Activated naive CD4-positive, alpha-beta T cell treated with anti-CD3 and anti-CD28 coated beads for 36 hours (primary cell): ENCODE measurements at regions of chrX and their contacts with region 1.

Region 1: GRCh38 chrX:52261463-52262194 is 76.9 kb downstream of the MAGED4 start:
- DNase-seq: peak; percentile 91
- H3K4me3 Mint-ChIP-seq: peak overlapping the region; percentile 90
- H3K27ac Mint-ChIP-seq: peak overlapping the region; percentile 98
- H3K4me1 Mint-ChIP-seq: peaks cover 1% of the 10 kb centered on the region
- H3K27me3 Mint-ChIP-seq: peaks cover 2% of the 10 kb centered on the region

Region 2: DNA sequence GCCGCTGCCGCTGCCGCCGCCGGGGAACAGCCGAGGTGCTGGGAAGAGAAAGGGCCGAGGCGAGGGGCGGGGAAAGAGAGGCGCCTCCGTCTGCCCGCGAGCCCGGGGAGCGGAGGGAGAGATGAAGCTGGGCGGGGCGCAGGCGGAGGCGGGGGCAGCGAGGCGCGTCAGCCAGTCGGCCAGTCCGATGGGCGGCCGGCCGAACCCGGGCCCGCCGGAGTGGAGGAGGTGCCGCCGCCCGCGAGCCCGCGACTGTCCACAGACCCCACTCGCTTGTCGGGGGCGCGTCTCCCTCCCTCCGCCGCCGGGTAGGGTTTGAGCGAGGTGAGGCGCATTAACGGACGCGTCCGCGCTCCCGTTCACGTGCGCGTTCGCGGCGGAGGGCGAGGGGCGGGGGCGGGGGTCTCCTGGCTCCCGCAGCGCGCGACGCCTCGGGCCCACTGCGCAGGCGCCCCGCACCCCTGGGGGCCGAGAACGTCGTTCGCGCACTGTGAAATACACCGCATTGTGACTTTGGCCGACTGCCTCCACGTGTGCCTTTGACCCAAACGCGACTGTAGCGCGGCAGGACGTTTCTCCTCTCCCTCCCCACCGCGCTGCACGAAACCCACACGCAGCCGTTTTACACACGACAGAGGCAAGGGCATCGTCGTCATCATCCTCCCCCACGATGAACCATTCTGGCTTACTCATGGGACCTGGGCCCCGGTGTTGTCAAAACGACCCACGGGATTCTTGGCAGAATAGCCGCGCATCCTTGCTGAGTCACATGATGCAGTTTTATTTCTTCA is 764.9 kb before region 1 on chrX and contains the start of gene NUDT11:
- CTCF ChIA-PET with region 1: no interaction called
- intact Hi-C with region 1: loop called (anchors 5 kb)
- DNase-seq: peak; percentile 57
- H3K4me3 Mint-ChIP-seq: peak within 1 kb of the TSS; percentile 79
- H3K27ac Mint-ChIP-seq: no peak within 1 kb of the TSS
- H3K4me1 Mint-ChIP-seq: peaks cover 7% of the 10 kb centered on the region
- H3K27me3 Mint-ChIP-seq: peaks cover 17% of the 10 kb centered on the region
- total RNA-seq, gene NUDT11: 1.1 to 1.5 TPM

Region 3: DNA sequence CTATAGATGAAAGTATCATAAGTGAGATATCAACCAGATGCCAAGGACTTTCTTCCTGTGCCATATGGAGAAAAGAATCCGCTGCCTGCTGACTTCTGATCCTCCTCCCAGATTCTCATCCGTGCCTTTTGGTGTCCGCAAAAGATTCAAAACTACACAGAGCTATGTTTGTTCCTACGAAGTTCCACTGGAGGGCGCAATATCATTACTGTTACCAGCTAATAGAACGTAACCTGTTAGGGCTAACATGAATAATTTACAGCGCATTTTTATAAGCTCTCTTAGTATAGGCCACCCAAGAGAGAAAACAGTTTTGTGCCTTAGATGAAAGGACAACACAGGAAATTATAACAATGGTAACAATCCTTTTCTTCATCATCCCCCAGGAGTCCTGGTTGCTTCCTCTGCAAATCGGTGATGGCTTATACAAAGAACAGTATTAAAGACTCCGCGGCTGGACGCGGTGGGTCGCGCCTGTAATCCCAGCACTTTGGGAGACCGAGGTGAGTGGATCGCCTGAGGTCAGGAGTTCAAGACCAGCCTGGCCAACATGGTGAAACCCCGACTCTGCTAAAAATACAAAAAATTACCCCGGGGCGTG is 620.1 kb before region 1 on chrX:
- CTCF ChIA-PET with region 1: interaction called, 3 read pairs
- intact Hi-C with region 1: loop called (anchors 1 kb)
- DNase-seq: peak; percentile 17
- H3K4me3 Mint-ChIP-seq: no peak overlapping the region
- H3K27ac Mint-ChIP-seq: no peak overlapping the region
- H3K4me1 Mint-ChIP-seq: no peaks in the 10 kb centered on the region
- H3K27me3 Mint-ChIP-seq: peaks cover 18% of the 10 kb centered on the region

Region 4: GRCh38 chrX:51802917-51803688 is 458.5 kb before region 1 on chrX:
- CTCF ChIA-PET with region 1: interaction called, 4 read pairs
- intact Hi-C with region 1: loop called (anchors 5 kb)
- DNase-seq: peak; percentile 70
- H3K4me3 Mint-ChIP-seq: peak overlapping the region; percentile 98
- H3K27ac Mint-ChIP-seq: peak overlapping the region; percentile 97
- H3K4me1 Mint-ChIP-seq: peaks cover 21% of the 10 kb centered on the region
- H3K27me3 Mint-ChIP-seq: no peaks in the 10 kb centered on the region

Region 5: DNA sequence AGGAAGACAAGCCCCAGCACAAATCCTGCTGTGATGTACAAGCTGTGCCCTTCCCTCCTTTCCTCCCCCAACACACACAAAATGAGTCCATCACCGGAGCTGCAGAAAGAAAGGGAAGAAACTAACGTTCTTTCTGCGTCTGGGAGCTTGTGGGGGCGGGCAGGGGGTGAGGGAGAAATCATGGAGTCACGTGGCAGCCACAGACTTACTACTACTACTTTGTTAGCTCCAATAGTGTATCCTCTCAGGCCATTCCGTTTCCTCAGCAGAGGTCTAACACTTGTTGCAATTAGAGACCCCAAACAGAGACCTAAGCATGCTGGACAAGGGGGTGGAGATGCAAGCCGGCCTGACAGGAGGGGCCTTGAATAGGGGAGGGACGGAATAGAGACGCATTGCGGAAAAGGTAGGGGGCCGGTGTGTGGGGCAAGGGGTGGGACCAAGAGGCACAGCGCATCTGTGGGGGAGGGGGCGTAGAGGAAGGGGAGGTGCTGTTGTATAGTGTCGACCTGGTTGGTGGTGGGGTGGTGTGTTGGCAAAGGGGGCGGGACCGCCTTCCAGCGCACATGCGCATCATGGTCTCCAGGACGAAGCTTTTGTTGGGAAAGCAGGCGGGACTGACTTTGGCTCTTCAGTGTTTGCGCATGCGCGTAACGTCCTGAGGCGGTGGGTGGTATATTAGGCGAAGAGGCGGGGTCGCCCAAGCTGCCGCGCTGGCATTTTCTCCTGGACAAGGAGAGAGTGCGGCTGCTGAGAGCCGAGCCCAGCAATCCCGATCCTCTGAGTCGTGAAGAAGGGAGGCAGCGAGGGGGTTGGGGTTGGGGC is 368.5 kb before region 1 on chrX and contains the start of gene MAGED1:
- CTCF ChIA-PET with region 1: no interaction called
- intact Hi-C with region 1: loop called (anchors 2 kb)
- DNase-seq: peak; percentile 90
- H3K4me3 Mint-ChIP-seq: peak within 1 kb of the TSS; percentile 90
- H3K27ac Mint-ChIP-seq: peak within 1 kb of the TSS; percentile 78
- H3K4me1 Mint-ChIP-seq: peaks cover 11% of the 10 kb centered on the region
- H3K27me3 Mint-ChIP-seq: no peaks in the 10 kb centered on the region
- total RNA-seq, gene MAGED1: 33.0 to 34.6 TPM

Region 6: DNA sequence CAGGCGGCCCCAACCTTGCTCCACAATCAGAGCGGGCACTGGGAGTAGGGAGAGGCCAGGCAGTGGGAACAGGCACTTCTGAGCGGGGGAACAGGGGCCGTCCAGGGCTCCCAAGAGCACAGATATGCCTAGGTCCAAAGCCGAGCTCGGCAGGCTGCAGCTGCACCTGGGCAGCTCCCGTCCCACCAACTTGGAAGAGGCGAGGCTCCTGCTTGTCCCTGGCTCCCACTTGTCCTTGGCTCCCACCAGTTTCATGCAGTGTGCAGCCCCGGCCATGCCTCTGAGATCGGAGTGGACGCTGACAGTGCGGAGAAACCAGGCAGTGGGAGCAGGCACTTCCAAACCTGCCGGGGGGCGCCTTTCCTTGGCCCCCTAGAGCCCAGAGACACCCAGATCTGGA is 23.2 kb after region 1 on chrX:
- CTCF ChIA-PET with region 1: no interaction called
- intact Hi-C with region 1: no loop called
- DNase-seq: no peak
- H3K4me3 Mint-ChIP-seq: no peak overlapping the region
- H3K27ac Mint-ChIP-seq: no peak overlapping the region
- H3K4me1 Mint-ChIP-seq: no peaks in the 10 kb centered on the region
- H3K27me3 Mint-ChIP-seq: no peaks in the 10 kb centered on the region

Region 7: GRCh38 chrX:52425775-52426174 is 164.1 kb after region 1 on chrX:
- CTCF ChIA-PET with region 1: no interaction called
- intact Hi-C with region 1: no loop called
- DNase-seq: no peak
- H3K4me3 Mint-ChIP-seq: no peak overlapping the region
- H3K27ac Mint-ChIP-seq: no peak overlapping the region
- H3K4me1 Mint-ChIP-seq: no peaks in the 10 kb centered on the region
- H3K27me3 Mint-ChIP-seq: no peaks in the 10 kb centered on the region